ENCODE measurements at regions of chr11 and their contacts with region 1.

Region 1: DNA sequence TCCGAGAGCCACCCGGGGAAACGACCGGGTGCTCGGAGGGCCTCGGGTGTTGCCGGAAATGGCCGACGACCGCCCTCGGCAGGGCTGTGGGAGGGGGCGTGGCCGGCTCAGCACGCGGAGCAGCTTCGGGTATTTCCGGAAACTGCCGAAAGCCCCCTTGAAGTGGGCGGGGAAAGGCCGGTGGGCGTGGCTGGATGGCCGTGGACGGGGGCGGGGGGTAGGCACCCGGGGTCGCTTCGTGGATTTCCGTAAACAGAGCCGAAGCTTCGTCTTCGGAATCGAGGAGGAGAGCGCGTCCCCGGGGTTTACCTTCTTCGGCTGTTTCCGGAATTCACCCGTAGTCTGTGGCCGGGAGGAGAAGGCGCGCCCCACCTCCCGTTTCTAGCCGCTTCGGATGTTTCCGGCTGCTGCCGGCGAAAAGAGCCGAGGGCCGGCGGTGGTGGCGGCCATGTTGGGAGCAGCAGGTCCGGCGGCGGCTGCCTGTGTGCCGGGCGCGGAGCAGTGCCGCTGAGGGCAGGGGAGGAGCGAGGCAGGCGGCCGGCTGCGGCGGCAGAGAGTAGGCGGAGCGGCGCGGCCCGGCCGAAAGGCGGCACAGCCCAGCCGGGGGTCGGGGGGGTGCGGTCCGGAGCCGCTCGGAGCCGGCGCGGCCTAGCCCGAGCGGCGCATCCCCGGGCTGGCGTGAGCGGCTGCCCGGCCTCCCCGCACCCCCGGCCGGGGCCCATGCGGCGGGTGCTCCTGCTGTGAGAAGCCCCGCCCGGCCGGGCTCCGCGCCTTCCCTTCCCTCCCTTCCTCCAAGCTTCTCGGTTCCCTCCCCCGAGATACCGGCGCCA is at the start of gene MARK2:
- DNase-seq: peak; percentile 97
- ATAC-seq: peak; percentile 86 to 89
- H3K4me3 ChIP-seq: peak within 1 kb of the TSS; percentile 78 to 99 (median 86)
- H3K27ac ChIP-seq: peak within 1 kb of the TSS; percentile 82 to 94 (median 84)
- H3K4me1 ChIP-seq: peaks cover 35 to 40% of the 10 kb centered on the region in 2 donors
- H3K27me3 ChIP-seq: no peaks in the 10 kb centered on the region
- CTCF ChIP-seq: peak in 1 of 5 experiments; percentile 14
- POLR2A ChIP-seq: peak; percentile 87 to 89
- total RNA-seq, gene MARK2: 17.8 to 37.2 (median 30.3) TPM

Region 2: DNA sequence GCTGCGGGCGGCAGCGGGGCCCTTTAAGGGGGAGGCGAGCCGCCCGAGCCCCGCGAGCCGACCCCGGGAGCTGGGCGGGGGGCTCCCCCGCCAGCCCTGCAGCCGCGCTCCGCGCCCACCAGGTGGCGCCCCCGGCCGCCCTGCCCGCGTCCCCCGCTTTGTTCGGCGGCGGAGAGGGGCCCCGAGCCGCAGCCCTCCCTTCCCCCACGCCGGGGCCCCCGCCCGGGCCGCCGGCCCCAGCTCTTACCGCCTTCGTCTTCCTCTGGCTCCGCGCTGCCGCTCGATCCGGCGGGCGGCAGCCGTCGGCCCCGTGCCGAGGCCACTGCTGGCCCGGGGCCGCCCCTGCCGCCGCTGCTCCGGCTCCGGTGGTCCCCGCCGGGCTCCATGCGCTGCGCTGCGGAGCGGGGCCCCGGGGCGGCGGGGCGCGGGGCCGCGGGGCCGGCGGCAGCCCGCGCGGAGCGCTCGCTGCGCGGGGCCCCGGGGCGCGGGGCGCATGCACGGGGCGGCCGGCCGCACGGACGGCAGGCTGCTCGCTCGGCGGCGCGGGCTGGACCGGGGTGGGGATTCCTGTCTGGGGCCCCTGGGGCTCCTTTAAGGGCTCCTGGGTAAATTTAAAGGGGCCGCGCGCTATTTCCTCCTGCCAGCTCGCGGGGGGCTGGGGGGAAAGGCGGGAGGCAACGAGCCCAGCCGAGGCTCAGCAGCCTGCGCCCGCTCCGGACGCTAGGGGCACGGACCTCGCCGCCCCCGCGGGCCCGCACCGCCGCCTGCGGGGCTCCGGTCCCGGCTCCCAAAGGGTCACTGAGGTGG is 70.5 kb before region 1 on chr11 and contains the start of gene ZFTA:
- in situ Hi-C with region 1: no loop called
- intact Hi-C with region 1: loop called (anchors 2 kb)
- DNase-seq: peak in 1 of 2 donors; percentile 31
- ATAC-seq: peak; percentile 60 to 70
- H3K4me3 ChIP-seq: peak within 1 kb of the TSS; percentile 67 to 83 (median 72)
- H3K27ac ChIP-seq: peak within 1 kb of the TSS; percentile 69 to 81 (median 77)
- H3K4me1 ChIP-seq: peaks cover 10 to 13% of the 10 kb centered on the region in 2 donors
- H3K27me3 ChIP-seq: no peaks in the 10 kb centered on the region
- CTCF ChIP-seq: peak in 4 of 5 experiments; percentile 90 to 97 (median 95)
- POLR2A ChIP-seq: no peak
- total RNA-seq, gene ZFTA: 6.9 to 18.6 (median 11.8) TPM

Region 3: GRCh38 chr11:63871962-63872799 is 33.3 kb after region 1 on chr11:
- in situ Hi-C with region 1: no loop called
- intact Hi-C with region 1: loop called (anchors 1 kb)
- DNase-seq: peak; percentile 87 to 92
- ATAC-seq: peak; percentile 98
- H3K4me3 ChIP-seq: peak overlapping the region in 3 of 4 donors; percentile 10 to 46 (median 14)
- H3K27ac ChIP-seq: peak overlapping the region; percentile 71 to 86 (median 79)
- H3K4me1 ChIP-seq: peaks cover 53 to 56% of the 10 kb centered on the region in 2 donors
- H3K27me3 ChIP-seq: no peaks in the 10 kb centered on the region
- CTCF ChIP-seq: peak; percentile 42 to 56 (median 53)
- POLR2A ChIP-seq: peak in 1 of 2 donors; percentile 24

Region 4: GRCh38 chr11:64165849-64166635 is 327.1 kb after region 1 on chr11 and contains the start of gene MACROD1:
- in situ Hi-C with region 1: loop called in 1 of 4 experiments (anchors 25 kb)
- intact Hi-C with region 1: no loop called
- DNase-seq: peak; percentile 92 to 95
- ATAC-seq: peak; percentile 64 to 65
- H3K4me3 ChIP-seq: peak within 1 kb of the TSS; percentile 58 to 84 (median 77)
- H3K27ac ChIP-seq: peak within 1 kb of the TSS; percentile 94 to 98 (median 97)
- H3K4me1 ChIP-seq: peaks cover 22 to 29% of the 10 kb centered on the region in 2 donors
- H3K27me3 ChIP-seq: no peaks in the 10 kb centered on the region
- CTCF ChIP-seq: peak in 2 of 5 experiments; percentile 9 to 11
- POLR2A ChIP-seq: peak; percentile 96 to 98
- total RNA-seq, gene MACROD1: 162 to 308 (median 205) TPM